Right cardiac atrium (tissue), 5 donors: ENCODE measurements at regions of chr7 and their contacts with region 1.

Region 1: GRCh38 chr7:95723592-95724180 is 48.7 kb upstream of the DYNC1I1 start:
- DNase-seq: peak; percentile 19 to 36 (median 22)
- ATAC-seq: peak; percentile 74 to 80
- H3K4me3 ChIP-seq: no peak overlapping the region
- H3K27ac ChIP-seq: no peak overlapping the region
- H3K4me1 ChIP-seq: no peaks in the 10 kb centered on the region
- H3K27me3 ChIP-seq: no peaks in the 10 kb centered on the region

Region 2: GRCh38 chr7:95517458-95517857 is 206.2 kb before region 1 on chr7:
- intact Hi-C with region 1: no loop called
- DNase-seq: no peak
- ATAC-seq: no peak
- H3K4me3 ChIP-seq: no peak overlapping the region
- H3K27ac ChIP-seq: no peak overlapping the region
- H3K4me1 ChIP-seq: no peaks in the 10 kb centered on the region
- H3K27me3 ChIP-seq: no peaks in the 10 kb centered on the region

Region 3: DNA sequence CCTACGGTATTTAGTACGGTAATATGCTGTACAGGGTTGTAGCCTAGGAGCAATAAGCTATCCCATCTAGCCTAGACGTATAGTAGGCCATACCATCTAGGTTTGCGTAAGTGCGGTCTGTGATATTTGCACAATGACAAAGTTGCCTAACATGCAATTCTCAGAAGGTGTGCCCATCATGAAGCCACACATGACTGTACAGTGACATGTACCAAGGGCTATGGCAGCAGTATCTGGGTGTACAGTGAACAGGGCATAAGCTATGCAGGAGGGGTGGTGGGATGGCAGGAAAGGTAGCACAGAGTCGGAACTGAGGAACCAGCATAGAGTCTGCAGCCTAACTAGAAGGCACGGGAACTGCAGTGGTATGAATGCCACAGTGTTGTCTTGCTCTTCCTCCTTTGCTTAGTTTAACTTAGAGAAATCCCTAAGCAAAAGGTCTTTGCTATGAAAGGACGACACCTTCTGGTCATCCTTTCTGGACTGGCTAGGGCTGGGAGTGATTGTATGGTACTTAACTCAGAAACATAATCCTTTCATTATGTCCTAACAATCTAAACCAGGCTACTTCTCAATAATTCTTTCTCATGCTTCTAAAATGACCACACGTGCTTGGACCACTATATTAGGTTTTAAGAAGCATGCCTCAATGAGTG is 142.2 kb after region 1 on chr7:
- intact Hi-C with region 1: loop called (anchors 2 to 5 kb)
- DNase-seq: no peak
- ATAC-seq: no peak
- H3K4me3 ChIP-seq: no peak overlapping the region
- H3K27ac ChIP-seq: no peak overlapping the region
- H3K4me1 ChIP-seq: no peaks in the 10 kb centered on the region
- H3K27me3 ChIP-seq: no peaks in the 10 kb centered on the region

Region 4: DNA sequence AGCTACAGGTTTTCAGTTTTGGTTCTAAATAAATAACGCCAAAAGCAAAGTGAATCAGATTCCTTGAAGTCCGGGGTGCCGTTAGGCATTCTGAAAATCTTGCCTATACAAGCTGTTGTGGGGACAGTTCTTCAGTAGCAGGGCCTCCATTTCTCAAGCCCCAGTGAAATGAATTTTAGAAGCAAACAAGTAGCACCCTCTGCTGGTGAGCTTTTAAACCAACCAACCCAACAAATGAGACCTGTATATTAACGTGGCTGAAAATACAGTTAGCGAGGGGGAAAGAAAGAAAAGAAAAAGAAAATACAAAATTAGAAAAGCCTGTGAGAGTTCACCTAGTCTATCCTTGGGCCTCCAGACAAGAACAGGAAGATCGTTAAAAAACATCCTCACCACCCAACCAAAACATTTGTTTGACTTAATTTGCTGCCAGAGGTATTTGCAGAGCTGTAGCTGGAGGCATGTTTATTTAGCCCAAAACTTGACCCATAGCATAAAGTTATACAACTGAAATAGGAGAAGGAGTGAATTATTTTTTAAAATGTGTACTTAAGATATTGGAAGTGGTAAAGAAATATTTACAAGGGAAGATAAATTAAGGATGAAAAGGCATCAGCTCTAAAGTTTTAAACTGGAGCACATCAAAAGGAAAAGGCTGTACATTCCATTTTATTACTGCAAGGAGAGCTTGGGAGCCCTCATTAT is 147.5 kb after region 1 on chr7:
- intact Hi-C with region 1: loop called (anchors 2 to 5 kb)
- DNase-seq: no peak
- ATAC-seq: peak; percentile 40 to 63
- H3K4me3 ChIP-seq: no peak overlapping the region
- H3K27ac ChIP-seq: no peak overlapping the region
- H3K4me1 ChIP-seq: peaks cover 4% of the 10 kb centered on the region
- H3K27me3 ChIP-seq: no peaks in the 10 kb centered on the region